ENCODE measurements at regions of chr17 and their contacts with region 1.

Region 1: GRCh38 chr17:48908047-48908843 is at the start of gene UBE2Z:
- DNase-seq: peak; percentile 95
- H3K4me3 ChIP-seq: peak within 1 kb of the TSS; percentile 99
- H3K27ac ChIP-seq: peak within 1 kb of the TSS; percentile 76
- H3K4me1 ChIP-seq: peaks cover 22% of the 10 kb centered on the region
- CTCF ChIP-seq: peak; percentile 62
- total RNA-seq, gene UBE2Z: 44.7 and 52.3 TPM in 2 replicates

Region 2: DNA sequence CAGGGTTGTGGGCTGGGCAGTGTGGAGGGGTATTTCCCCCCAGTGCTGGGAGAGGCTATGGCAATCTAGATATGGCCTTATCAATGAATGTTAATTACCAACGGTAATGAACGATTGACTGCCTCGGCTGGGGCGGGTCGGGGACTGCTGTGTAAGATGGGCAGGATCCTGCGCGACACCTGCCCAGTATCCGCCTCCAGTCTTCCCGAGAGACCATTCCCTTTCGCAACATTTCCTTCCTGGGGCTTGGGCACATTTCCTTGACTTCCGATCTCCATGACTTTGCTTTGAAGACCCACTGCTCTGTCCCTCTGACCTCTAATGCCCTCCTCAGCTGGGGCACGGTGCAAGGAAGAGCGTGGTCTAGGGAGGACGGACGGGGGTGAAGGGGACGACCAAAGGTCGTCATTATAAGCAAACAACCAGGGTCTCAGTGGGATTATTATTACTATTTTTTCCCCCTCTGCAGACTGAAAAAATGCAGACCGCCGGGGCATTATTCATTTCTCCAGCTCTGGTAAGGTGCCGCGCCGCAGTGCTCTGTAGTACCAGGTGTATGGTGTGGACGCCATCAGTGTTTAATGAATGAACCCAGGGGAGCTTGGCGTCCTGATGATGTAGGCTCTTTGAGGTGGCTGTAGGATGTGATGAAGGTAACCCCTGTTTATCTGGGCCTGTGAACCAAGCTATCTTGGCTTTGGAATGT is 15.2 kb before region 1 on chr17:
- CTCF ChIA-PET with region 1: no interaction called
- POLR2A ChIA-PET with region 1: interaction called, 14 read pairs
- intact Hi-C with region 1: loop called (anchors 1 kb)
- DNase-seq: peak; percentile 29
- H3K4me3 ChIP-seq: peak overlapping the region; percentile 96
- H3K27ac ChIP-seq: peak overlapping the region; percentile 46
- H3K4me1 ChIP-seq: peaks cover 19% of the 10 kb centered on the region
- CTCF ChIP-seq: no peak

Region 3: GRCh38 chr17:48944519-48945260 is 36.4 kb after region 1 on chr17 and contains the start of gene SNF8:
- CTCF ChIA-PET with region 1: no interaction called
- POLR2A ChIA-PET with region 1: no interaction called
- intact Hi-C with region 1: no loop called
- DNase-seq: peak; percentile 93
- H3K4me3 ChIP-seq: peak within 1 kb of the TSS; percentile 95
- H3K27ac ChIP-seq: peak within 1 kb of the TSS; percentile 57
- H3K4me1 ChIP-seq: peaks cover 14% of the 10 kb centered on the region
- CTCF ChIP-seq: no peak
- total RNA-seq, gene SNF8: 45.8 and 57.2 TPM in 2 replicates